Activated CD8-positive, alpha-beta memory T cell treated with anti-CD3 and anti-CD28 coated beads, Interleukin-2, amount 10 ng/mL, durations not matched to agents 7 days and 5 days (primary cell): ENCODE measurements at regions of chr1 and their contacts with region 1.

Region 1: GRCh38 chr1:26500488-26501175 is 28.4 kb downstream of the HMGN2 start:
- DNase-seq: peak; percentile 93
- ATAC-seq: peak; percentile 77
- H3K4me3 Mint-ChIP-seq: peak overlapping the region; percentile 80
- H3K27ac Mint-ChIP-seq: peak overlapping the region; percentile 95
- H3K4me1 Mint-ChIP-seq: peaks cover 17% of the 10 kb centered on the region
- H3K27me3 Mint-ChIP-seq: no peaks in the 10 kb centered on the region

Region 2: GRCh38 chr1:26372039-26372438 is 128.6 kb before region 1 on chr1:
- CTCF ChIA-PET with region 1: no interaction called
- DNase-seq: no peak
- ATAC-seq: no peak
- H3K4me3 Mint-ChIP-seq: no peak overlapping the region
- H3K27ac Mint-ChIP-seq: peak overlapping the region; percentile 82
- H3K4me1 Mint-ChIP-seq: peaks cover 74% of the 10 kb centered on the region
- H3K27me3 Mint-ChIP-seq: no peaks in the 10 kb centered on the region

Region 3: DNA sequence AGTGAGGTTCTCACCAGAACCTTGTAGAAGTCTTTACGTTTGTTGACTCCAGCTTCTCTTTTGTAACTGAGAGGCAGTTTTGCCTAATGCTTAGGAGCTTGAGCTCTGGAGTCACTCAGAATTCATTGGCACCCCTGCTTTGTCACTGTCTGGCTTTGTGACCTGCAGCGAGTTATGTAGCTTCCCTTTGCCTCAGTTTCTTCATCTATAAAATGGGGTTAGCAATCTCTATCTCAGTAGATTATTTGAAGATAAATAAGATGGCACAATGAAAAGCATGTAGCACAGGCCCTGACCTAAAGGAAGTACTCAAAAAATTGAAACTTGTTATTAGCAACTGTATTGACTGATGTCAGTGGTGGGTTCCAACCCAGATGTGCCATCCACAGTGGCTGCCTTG is 60.4 kb before region 1 on chr1:
- CTCF ChIA-PET with region 1: no interaction called
- DNase-seq: no peak
- ATAC-seq: no peak
- H3K4me3 Mint-ChIP-seq: no peak overlapping the region
- H3K27ac Mint-ChIP-seq: no peak overlapping the region
- H3K4me1 Mint-ChIP-seq: no peaks in the 10 kb centered on the region
- H3K27me3 Mint-ChIP-seq: no peaks in the 10 kb centered on the region

Region 4: GRCh38 chr1:26516987-26517765 is 16.5 kb after region 1 on chr1:
- CTCF ChIA-PET with region 1: interaction called, 23 read pairs
- DNase-seq: no peak
- ATAC-seq: no peak
- H3K4me3 Mint-ChIP-seq: no peak overlapping the region
- H3K27ac Mint-ChIP-seq: no peak overlapping the region
- H3K4me1 Mint-ChIP-seq: no peaks in the 10 kb centered on the region
- H3K27me3 Mint-ChIP-seq: peaks cover 11% of the 10 kb centered on the region

Region 5: GRCh38 chr1:26529655-26530409 is 29.2 kb after region 1 on chr1 and contains the start of gene RPS6KA1:
- CTCF ChIA-PET with region 1: interaction called, 14 read pairs
- DNase-seq: peak; percentile 71
- ATAC-seq: peak; percentile 96
- H3K4me3 Mint-ChIP-seq: peak within 1 kb of the TSS; percentile 79
- H3K27ac Mint-ChIP-seq: peak within 1 kb of the TSS; percentile 81
- H3K4me1 Mint-ChIP-seq: peaks cover 32% of the 10 kb centered on the region
- H3K27me3 Mint-ChIP-seq: peaks cover 6% of the 10 kb centered on the region
- total RNA-seq, gene RPS6KA1: 158 to 181 TPM

Region 6: DNA sequence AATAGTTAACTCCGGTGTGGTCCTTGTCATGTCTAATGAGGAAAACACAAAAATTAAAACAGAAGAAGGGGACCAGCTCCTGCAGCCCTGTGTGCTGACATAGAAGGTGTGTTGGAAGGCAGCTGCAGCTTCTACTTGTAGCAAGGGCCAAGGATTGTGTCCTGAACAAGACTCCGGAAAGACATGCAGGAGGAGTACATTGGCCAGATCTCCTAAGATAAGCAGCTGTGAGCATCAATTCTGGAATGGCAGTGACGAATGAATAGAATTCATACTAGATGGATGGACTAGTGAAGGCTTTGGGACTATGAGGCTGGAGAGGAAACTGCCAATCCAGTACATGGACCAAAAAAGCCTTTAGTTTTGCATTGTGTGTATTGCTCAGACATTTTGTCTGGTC is 48.2 kb after region 1 on chr1:
- CTCF ChIA-PET with region 1: interaction called, 15 read pairs
- DNase-seq: no peak
- ATAC-seq: no peak
- H3K4me3 Mint-ChIP-seq: no peak overlapping the region
- H3K27ac Mint-ChIP-seq: no peak overlapping the region
- H3K4me1 Mint-ChIP-seq: peaks cover 58% of the 10 kb centered on the region
- H3K27me3 Mint-ChIP-seq: no peaks in the 10 kb centered on the region

Region 7: GRCh38 chr1:26602378-26602959 is 101.8 kb after region 1 on chr1:
- CTCF ChIA-PET with region 1: interaction called, 21 read pairs
- DNase-seq: no peak
- ATAC-seq: no peak
- H3K4me3 Mint-ChIP-seq: no peak overlapping the region
- H3K27ac Mint-ChIP-seq: no peak overlapping the region
- H3K4me1 Mint-ChIP-seq: peaks cover 15% of the 10 kb centered on the region
- H3K27me3 Mint-ChIP-seq: peaks cover 28% of the 10 kb centered on the region

Region 8: GRCh38 chr1:26949926-26950319 is 449.3 kb after region 1 on chr1:
- CTCF ChIA-PET with region 1: no interaction called
- DNase-seq: no peak
- ATAC-seq: no peak
- H3K4me3 Mint-ChIP-seq: no peak overlapping the region
- H3K27ac Mint-ChIP-seq: no peak overlapping the region
- H3K4me1 Mint-ChIP-seq: no peaks in the 10 kb centered on the region
- H3K27me3 Mint-ChIP-seq: no peaks in the 10 kb centered on the region